Right ventricle myocardium superior (tissue), 1 donor: ENCODE measurements at regions of chr7 and their contacts with region 1.

Region 1: GRCh38 chr7:139023076-139023475 is 12.8 kb downstream of the ZC3HAV1L start:
- DNase-seq: no peak
- ATAC-seq: no peak

Region 2: DNA sequence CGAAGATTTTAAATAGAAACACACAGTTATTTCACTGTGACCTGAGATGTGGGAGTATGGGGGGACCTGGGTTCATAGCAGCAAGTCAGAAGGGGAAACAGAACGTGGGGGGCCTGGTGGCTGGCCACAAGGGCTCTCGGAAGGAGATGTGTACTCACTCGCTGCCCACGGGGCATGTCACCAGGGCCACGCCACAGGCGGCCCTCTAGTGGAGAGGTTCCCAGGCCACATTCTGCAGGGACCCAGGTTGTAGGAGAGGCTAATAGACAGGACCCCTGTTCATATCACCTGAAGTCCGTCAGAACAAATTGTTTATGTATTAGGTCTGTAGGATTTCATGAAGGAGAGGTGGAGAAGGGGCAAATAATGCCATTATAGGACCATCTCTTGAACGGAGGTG is 296.8 kb before region 1 on chr7:
- intact Hi-C with region 1: no loop called
- DNase-seq: no peak
- ATAC-seq: no peak

Region 3: DNA sequence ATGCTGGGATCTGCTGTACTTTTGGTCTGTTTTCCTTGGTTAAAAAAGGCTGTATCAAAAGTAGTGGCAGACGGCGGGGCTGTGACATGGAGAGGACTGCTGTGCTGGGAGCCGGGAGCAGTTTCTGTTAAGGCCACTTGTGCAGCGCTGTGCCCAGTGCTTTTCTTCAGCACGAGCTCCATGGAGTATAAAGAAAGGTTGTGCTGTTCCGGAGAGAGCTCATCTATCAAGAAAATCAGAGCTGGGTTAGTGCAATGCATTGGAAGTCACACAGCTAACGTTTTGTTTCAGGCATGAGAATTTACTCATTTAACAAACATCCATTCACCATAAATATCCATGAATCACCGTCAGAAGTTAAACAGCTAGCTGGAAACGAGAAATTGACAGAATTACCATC is 103.9 kb before region 1 on chr7:
- intact Hi-C with region 1: no loop called
- DNase-seq: no peak
- ATAC-seq: no peak

Region 4: DNA sequence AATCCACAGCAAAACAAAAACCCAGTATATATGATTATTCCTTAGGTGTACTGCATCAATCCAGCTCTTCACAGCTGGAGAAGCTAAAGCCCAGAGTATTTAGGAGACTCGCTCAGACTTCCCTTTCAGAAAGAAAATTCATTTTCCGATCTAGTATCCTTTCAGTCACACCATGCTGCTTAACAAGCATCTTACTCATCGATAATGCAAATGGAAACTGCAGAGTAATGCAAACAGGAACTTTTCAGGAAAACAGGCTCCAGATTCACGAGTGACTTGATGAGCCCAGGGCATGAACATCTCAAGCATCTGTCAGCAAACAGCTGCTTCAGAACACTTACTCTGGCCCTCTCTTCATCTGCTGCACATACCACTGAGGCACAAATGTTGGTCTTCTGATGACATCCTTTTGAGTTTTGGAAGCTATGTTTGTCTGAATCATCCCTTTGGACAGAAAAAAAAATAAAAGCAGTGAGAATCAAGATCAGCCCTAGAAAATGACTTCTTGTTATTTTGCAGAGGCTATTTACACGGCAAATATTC is 37.7 kb after region 1 on chr7:
- intact Hi-C with region 1: loop called (anchors 5 kb)
- DNase-seq: no peak
- ATAC-seq: no peak

Region 5: GRCh38 chr7:139075031-139075652 is 52.1 kb after region 1 on chr7:
- intact Hi-C with region 1: loop called (anchors 5 kb)
- DNase-seq: peak; percentile 62
- ATAC-seq: peak; percentile 93

Region 6: GRCh38 chr7:139086454-139086853 is 63.4 kb after region 1 on chr7:
- intact Hi-C with region 1: no loop called
- DNase-seq: no peak
- ATAC-seq: no peak